Thyroid gland (tissue), 4 donors: ENCODE measurements at regions of chr20 and their contacts with region 1.

Region 1: DNA sequence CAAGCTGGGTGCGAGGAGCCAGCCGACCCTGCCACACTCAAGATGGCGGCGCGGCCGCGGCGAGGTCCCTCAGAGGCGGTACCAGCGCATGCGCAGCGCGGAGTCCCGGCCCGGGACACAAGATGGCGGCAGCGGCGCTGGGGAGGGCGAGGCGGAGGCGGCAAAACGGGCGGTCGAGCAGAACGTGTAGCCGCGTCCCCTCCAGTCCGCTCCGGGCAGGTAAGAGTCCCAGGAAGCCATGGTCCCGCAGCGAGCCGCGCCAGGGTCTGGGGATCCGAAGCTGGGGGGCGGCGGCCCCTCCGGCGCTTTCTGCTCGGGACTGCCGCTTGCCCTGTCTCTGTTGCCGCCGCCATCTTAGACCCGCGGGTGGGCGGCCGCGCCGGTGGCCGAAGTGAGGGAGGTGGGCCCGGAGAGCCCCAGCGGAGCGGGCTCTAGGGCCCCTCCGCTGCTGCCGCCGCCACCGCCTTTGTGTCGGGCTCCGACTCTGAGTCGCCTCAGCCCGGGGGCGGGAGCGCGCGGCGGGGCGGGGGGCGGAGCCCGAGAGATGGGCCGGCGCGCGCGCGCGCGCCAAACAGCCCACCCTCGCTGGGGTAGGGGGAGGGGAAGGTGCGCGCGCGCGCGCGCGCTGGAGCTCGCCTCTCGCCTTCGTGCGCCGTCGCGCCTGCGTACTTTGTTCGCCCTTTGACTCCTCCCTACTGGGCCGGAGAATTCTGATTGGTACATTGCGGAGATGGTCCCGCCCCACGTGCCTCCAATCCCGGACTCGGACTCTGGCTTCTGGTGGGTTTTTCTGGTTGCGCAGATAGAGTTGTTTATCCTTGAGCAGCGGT is at the start of gene PCIF1:
- DNase-seq: peak; percentile 97 to 98
- H3K4me3 ChIP-seq: peak within 1 kb of the TSS; percentile 38 to 96 (median 96)
- H3K27ac ChIP-seq: peak within 1 kb of the TSS; percentile 97 to 100 (median 100)
- H3K4me1 ChIP-seq: peaks cover 14% of the 10 kb centered on the region in 2 donors
- H3K27me3 ChIP-seq: no peaks in the 10 kb centered on the region
- CTCF ChIP-seq: peak in 1 of 6 experiments; percentile 18
- POLR2A ChIP-seq: peak; percentile 97
- total RNA-seq, gene PCIF1: 28.1 to 63.6 (median 49.1) TPM

Region 2: DNA sequence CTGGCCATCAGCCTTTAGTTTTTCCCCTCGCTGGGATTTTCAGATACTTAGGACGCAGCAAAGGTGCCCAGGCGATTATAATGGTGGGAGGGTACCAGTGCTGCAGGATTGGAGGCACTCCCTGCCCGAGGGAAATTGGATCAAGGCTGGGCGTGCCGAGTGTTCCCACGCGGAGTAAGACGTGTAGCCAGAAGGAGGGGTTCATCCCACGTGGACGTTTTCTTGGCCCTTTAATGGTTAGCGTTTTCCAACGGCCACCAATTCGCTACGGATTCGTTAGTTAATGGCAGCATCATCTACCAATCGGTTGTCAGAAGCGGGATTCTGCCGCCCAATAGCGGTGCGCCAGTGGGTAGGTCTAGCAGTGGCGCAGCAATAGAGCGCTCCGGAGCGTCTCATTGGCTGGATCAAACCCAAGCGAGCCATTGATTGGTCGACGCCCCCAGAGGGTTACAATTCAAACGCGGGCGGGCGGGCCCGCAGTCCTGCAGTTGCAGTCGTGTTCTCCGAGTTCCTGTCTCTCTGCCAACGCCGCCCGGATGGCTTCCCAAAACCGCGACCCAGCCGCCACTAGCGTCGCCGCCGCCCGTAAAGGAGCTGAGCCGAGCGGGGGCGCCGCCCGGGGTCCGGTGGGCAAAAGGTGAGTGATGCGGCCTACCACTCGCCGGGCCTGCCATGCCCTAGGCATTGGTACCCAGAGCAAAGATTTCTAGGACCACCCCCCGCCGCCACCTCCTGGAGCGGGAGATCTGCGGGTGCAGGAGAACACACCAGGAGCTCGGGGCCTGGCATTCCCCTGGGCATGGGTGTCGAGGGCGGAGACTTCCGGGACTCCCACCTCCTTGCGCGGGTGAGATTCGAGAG is 122.4 kb before region 1 on chr20 and contains the start of gene UBE2C:
- intact Hi-C with region 1: loop called (anchors 10 kb)
- DNase-seq: peak; percentile 98
- H3K4me3 ChIP-seq: peak within 1 kb of the TSS in 2 of 3 donors; percentile 37 to 38
- H3K27ac ChIP-seq: no peak within 1 kb of the TSS
- H3K4me1 ChIP-seq: peaks cover 4 to 5% of the 10 kb centered on the region in 2 donors
- H3K27me3 ChIP-seq: no peaks in the 10 kb centered on the region
- CTCF ChIP-seq: no peak
- POLR2A ChIP-seq: no peak
- total RNA-seq, gene UBE2C: 0.45 to 5.8 (median 2.6) TPM in 3 of 4 donors, not detected in the other

Region 3: GRCh38 chr20:45890985-45891983 is 43.5 kb before region 1 on chr20 and contains the starts of genes CTSA and NEURL2:
- intact Hi-C with region 1: loop called (anchors 5 kb)
- DNase-seq: peak; percentile 94 to 96
- H3K4me3 ChIP-seq: peak within 1 kb of the TSS; percentile 16 to 81 (median 67)
- H3K27ac ChIP-seq: peak within 1 kb of the TSS; percentile 66 to 79 (median 68)
- H3K4me1 ChIP-seq: peaks cover 10 to 24% of the 10 kb centered on the region in 2 donors
- H3K27me3 ChIP-seq: no peaks in the 10 kb centered on the region
- CTCF ChIP-seq: no peak
- POLR2A ChIP-seq: peak; percentile 14 to 76
- total RNA-seq, gene CTSA: 42.7 to 103 (median 51.3) TPM
- total RNA-seq, gene NEURL2: 12.6 to 17.4 (median 16.1) TPM